Transverse colon (tissue), 4 donors: ENCODE measurements at regions of chr9 and their contacts with region 1.

Region 1: DNA sequence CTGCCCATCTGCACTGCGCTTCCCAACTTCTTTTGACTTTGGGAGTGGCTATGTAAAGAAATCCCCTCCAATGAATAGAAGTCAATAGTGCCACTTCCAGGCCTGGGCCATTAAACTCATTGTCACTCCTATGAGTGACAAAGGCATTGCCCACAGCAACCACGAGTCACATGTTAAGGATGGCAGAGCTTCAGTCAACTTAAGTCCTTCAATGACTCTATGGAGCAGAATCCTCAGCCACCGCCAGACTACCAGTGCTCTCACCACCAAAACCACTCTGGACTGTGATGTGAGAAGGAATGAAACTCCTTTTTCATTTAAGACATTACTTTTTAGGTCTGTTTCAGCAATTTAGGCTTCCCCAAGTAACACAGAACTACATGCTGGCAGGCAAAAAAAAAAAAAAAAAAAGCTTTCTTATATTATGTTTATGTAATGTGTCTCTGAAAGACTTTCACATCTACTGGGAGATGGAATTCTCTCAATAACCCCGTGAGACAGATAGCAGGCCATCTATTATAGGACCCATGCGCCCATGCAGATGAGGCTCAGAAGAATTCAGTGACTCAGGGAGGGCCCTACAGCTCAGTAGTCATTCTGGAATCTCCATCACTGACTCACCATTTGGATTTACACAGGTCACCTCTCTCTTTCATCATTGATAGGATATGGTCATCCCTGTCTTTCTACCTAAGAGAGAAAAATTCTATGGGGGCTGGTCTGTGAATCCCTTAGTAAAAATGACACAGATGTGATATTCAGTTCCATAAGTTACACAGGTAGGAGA is 180.5 kb downstream of the CEMIP2 start:
- DNase-seq: no peak
- H3K4me3 ChIP-seq: no peak overlapping the region
- H3K27ac ChIP-seq: no peak overlapping the region
- H3K4me1 ChIP-seq: no peaks in the 10 kb centered on the region
- H3K27me3 ChIP-seq: no peaks in the 10 kb centered on the region
- CTCF ChIP-seq: no peak
- EP300 ChIP-seq: no peak
- POLR2A ChIP-seq: no peak

Region 2: DNA sequence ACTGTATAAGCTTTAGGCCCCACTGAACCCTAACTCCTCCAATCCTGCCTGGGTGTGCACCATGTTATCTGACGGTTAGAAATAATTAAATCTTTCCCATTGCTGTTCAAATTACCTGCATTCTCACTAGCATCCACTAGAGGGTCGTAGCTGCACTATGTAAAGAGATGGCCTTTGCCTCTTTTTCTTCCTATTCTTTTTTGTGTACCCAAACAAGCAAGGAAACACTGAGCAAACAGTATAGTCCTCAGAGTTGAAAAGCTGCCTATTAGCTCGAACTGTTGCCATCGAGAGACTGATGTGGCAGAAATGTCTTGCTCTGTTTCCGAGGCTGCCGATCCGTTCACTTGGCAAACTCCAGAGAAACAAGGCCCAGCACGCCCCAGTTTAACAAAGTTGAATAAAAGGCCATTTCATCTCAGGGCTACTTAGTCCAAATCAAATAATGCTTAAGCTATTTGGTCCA is 302.5 kb before region 1 on chr9:
- in situ Hi-C with region 1: loop called in 1 of 4 experiments (anchors 25 kb)
- intact Hi-C with region 1: no loop called
- DNase-seq: peak; percentile 11
- H3K4me3 ChIP-seq: no peak overlapping the region
- H3K27ac ChIP-seq: no peak overlapping the region
- H3K4me1 ChIP-seq: no peaks in the 10 kb centered on the region
- H3K27me3 ChIP-seq: no peaks in the 10 kb centered on the region
- CTCF ChIP-seq: peak; percentile 73 to 84 (median 78)
- EP300 ChIP-seq: no peak
- POLR2A ChIP-seq: no peak

Region 3: GRCh38 chr9:71638627-71639026 is 50.9 kb after region 1 on chr9:
- in situ Hi-C with region 1: no loop called
- intact Hi-C with region 1: loop called (anchors 2 kb)
- DNase-seq: peak; percentile 26
- H3K4me3 ChIP-seq: no peak overlapping the region
- H3K27ac ChIP-seq: peak overlapping the region in 3 of 4 donors; percentile 14 to 18 (median 14)
- H3K4me1 ChIP-seq: no peaks in the 10 kb centered on the region
- H3K27me3 ChIP-seq: no peaks in the 10 kb centered on the region
- CTCF ChIP-seq: no peak
- EP300 ChIP-seq: no peak
- POLR2A ChIP-seq: no peak